ENCODE measurements at regions of chr6 and their contacts with region 1.

Region 1: DNA sequence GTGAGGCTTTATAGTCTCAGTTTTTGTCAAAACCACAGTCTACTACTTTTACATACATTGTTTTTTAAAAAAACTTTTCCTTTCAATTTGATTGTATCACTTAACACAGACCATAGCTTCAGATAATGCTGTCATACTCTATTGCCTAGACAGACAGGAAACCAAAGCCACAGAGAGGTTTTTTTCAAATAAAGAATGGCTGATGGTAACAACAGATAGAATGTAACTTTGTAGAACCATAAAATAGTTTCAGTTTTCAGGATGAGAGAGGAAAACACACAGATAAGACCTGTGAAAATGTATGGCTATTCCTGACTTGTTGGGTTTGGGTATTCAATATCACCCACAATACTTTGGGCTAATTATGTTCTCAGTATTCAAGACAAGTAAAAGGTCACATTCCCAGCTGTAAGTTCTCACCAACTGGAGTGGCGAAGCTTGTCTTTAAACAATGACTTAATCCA is 94.0 kb downstream of the ADGRG6 start:
- DNase-seq: no peak
- ATAC-seq: no peak

Region 2: GRCh38 chr6:142167486-142167885 is 228.3 kb before region 1 on chr6:
- intact Hi-C with region 1: loop called (anchors 10 kb)
- DNase-seq: no peak
- ATAC-seq: no peak

Region 3: GRCh38 chr6:142474531-142475289 is 78.9 kb after region 1 on chr6:
- intact Hi-C with region 1: no loop called
- DNase-seq: no peak
- ATAC-seq: no peak